GM12878 (cell line): ENCODE measurements at regions of chr7 and their contacts with region 1.

Region 1: GRCh38 chr7:35624299-35625186 is 70.4 kb downstream of the HERPUD2 start:
- DNase-seq: no peak
- ATAC-seq: peak; percentile 95
- H3K4me3 ChIP-seq: no peak overlapping the region
- H3K27ac ChIP-seq: no peak overlapping the region
- H3K4me1 ChIP-seq: no peaks in the 10 kb centered on the region
- H3K27me3 ChIP-seq: no peaks in the 10 kb centered on the region
- CTCF ChIP-seq: peak; percentile 80 to 88 (median 85)
- EP300 ChIP-seq: no peak
- POLR2A ChIP-seq: no peak
- RAD21 ChIP-seq: peak; percentile 89

Region 2: GRCh38 chr7:35185907-35186731 is 438.4 kb before region 1 on chr7:
- CTCF ChIA-PET with region 1: interaction called, 6 read pairs
- POLR2A ChIA-PET with region 1: no interaction called
- RAD21 ChIA-PET with region 1: no interaction called
- SMC1A ChIA-PET with region 1: no interaction called
- in situ Hi-C with region 1: no loop called
- intact Hi-C with region 1: loop called (anchors 5 kb)
- DNase-seq: no peak
- ATAC-seq: no peak
- H3K4me3 ChIP-seq: no peak overlapping the region
- H3K27ac ChIP-seq: no peak overlapping the region
- H3K4me1 ChIP-seq: no peaks in the 10 kb centered on the region
- H3K27me3 ChIP-seq: no peaks in the 10 kb centered on the region; a peak in 2 of 4 replicates
- CTCF ChIP-seq: no peak
- EP300 ChIP-seq: no peak
- POLR2A ChIP-seq: no peak
- RAD21 ChIP-seq: no peak

Region 3: GRCh38 chr7:35424869-35425495 is 199.6 kb before region 1 on chr7:
- CTCF ChIA-PET with region 1: interaction called, 21 read pairs
- POLR2A ChIA-PET with region 1: no interaction called
- RAD21 ChIA-PET with region 1: interaction called, 8 read pairs
- SMC1A ChIA-PET with region 1: interaction called, 12 read pairs
- in situ Hi-C with region 1: loop called (anchors 10 kb)
- intact Hi-C with region 1: loop called (anchors 1 kb)
- DNase-seq: no peak
- ATAC-seq: peak; percentile 91
- H3K4me3 ChIP-seq: no peak overlapping the region
- H3K27ac ChIP-seq: no peak overlapping the region
- H3K4me1 ChIP-seq: no peaks in the 10 kb centered on the region
- H3K27me3 ChIP-seq: no peaks in the 10 kb centered on the region; a peak in 1 of 4 replicates
- CTCF ChIP-seq: peak; percentile 60 to 81 (median 77)
- EP300 ChIP-seq: no peak
- POLR2A ChIP-seq: no peak
- RAD21 ChIP-seq: peak; percentile 66

Region 4: DNA sequence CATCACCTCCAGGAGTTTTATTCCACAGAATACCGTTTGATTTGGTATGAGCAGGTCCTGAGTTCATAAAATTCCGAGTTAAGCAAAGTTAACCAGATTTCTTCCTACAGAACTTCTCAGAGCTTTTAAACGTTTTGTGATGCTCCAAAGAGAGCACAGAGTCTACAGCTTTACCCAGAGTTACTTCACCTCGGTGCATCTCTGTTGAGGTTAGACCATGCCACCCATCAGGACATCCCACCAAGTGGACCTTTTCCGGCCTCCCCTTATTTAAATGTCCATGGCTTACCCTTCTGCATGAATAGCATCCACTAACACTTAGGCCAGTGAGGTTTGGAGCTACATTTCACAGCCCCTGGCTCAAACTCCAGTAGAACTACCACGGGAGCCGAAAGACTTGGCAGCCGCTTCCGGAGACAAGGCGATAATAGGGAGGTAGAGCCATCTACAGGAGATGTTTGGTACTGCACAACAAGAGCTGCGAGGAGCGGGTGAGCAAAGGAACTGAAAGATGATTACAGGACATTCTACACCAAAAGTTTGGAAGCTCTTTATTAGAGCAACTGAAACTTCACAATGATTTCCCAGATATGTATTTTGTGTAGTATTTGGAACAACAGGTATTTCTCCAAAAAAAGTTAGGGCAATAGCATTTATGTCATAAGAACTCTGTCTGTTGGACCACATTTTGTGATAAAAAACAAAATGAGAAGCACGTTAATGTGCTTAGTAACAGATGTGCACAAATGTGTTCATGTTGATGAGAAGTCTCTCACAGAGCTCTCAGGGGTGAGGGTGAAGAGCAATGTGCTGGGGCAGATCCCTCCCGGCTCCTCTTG is 104.4 kb before region 1 on chr7:
- CTCF ChIA-PET with region 1: interaction called, 5 read pairs
- POLR2A ChIA-PET with region 1: no interaction called
- RAD21 ChIA-PET with region 1: no interaction called
- SMC1A ChIA-PET with region 1: interaction called, 5 read pairs
- in situ Hi-C with region 1: no loop called
- intact Hi-C with region 1: loop called (anchors 1 kb)
- DNase-seq: peak; percentile 4
- ATAC-seq: peak; percentile 93
- H3K4me3 ChIP-seq: no peak overlapping the region
- H3K27ac ChIP-seq: no peak overlapping the region
- H3K4me1 ChIP-seq: no peaks in the 10 kb centered on the region
- H3K27me3 ChIP-seq: peaks cover 0 to 4% of the 10 kb centered on the region in 2 experiments; a peak in 2 of 4 replicates
- CTCF ChIP-seq: peak; percentile 86 to 87 (median 86)
- EP300 ChIP-seq: no peak
- POLR2A ChIP-seq: no peak
- RAD21 ChIP-seq: peak; percentile 81

Region 5: GRCh38 chr7:35537067-35538023 is 87.2 kb before region 1 on chr7:
- CTCF ChIA-PET with region 1: interaction called, 21 read pairs
- POLR2A ChIA-PET with region 1: no interaction called
- RAD21 ChIA-PET with region 1: interaction called, 4 read pairs
- SMC1A ChIA-PET with region 1: interaction called, 9 read pairs
- in situ Hi-C with region 1: no loop called
- intact Hi-C with region 1: loop called (anchors 5 kb)
- DNase-seq: no peak
- ATAC-seq: peak; percentile 100
- H3K4me3 ChIP-seq: no peak overlapping the region
- H3K27ac ChIP-seq: no peak overlapping the region
- H3K4me1 ChIP-seq: no peaks in the 10 kb centered on the region
- H3K27me3 ChIP-seq: no peaks in the 10 kb centered on the region
- CTCF ChIP-seq: peak; percentile 94 to 96 (median 95)
- EP300 ChIP-seq: no peak
- POLR2A ChIP-seq: no peak
- RAD21 ChIP-seq: peak; percentile 76

Region 6: DNA sequence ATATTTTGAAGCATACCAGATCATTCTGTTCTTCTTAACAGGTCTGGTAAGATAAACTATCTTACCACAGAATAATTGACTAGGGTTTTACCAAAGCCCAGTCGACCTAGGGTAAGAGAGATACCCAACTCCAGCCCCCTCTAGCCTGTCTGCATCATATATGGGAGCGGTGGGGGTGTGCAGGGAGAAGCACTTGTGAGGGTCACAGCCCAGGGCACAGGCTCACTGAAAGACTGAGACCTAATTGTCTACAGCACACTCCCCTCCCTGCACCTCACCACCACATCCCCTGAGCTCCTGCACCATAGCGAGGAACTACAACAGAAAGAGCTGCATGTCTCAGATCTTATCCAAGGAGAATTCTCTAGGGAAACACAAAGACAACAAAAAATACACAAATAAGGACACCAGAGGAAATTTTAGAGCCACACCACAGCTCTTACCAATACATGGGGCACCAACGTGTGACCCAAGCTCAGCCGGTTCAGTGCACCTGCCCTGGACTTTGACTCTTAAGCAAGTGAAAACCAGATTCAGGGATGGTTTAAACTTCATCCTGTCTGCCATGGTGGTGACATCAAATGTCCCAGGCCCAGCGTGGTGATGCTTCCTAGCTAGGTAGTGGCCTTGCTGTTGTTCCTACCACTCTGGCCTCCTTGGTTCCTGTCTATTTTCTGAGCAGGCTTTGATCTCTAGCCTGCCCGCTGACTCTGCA is 80.4 kb before region 1 on chr7:
- CTCF ChIA-PET with region 1: interaction called, 21 read pairs
- POLR2A ChIA-PET with region 1: no interaction called
- RAD21 ChIA-PET with region 1: interaction called, 4 read pairs
- SMC1A ChIA-PET with region 1: interaction called, 10 read pairs
- in situ Hi-C with region 1: no loop called
- intact Hi-C with region 1: loop called (anchors 5 kb)
- DNase-seq: no peak
- ATAC-seq: peak; percentile 53
- H3K4me3 ChIP-seq: no peak overlapping the region
- H3K27ac ChIP-seq: no peak overlapping the region
- H3K4me1 ChIP-seq: no peaks in the 10 kb centered on the region
- H3K27me3 ChIP-seq: peaks cover 0 to 2% of the 10 kb centered on the region in 2 experiments; a peak in 2 of 4 replicates
- CTCF ChIP-seq: no peak
- EP300 ChIP-seq: no peak
- POLR2A ChIP-seq: no peak
- RAD21 ChIP-seq: no peak

Region 7: DNA sequence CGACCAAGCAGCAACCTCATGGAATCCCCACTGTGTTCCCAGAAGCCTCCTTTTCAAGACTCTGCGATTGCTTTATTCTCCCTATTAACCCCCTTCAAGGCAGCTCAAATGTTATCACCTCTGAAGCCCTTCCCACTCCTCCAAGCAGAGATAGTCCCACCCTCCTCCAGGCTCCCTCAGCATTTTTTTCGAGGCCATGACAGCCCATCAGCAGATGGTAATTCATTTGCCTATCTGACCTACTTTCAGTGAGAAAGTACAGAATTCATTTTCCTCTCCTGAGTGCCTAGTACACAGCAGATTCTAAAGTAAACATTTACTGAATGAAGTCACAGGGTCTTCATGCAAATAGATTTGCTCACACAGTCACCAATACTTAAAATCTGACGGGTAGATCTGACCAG is 22.6 kb after region 1 on chr7:
- CTCF ChIA-PET with region 1: interaction called, 11 read pairs
- POLR2A ChIA-PET with region 1: interaction called, 3 read pairs
- RAD21 ChIA-PET with region 1: interaction called, 5 read pairs
- SMC1A ChIA-PET with region 1: interaction called, 11 read pairs
- in situ Hi-C with region 1: no loop called
- intact Hi-C with region 1: no loop called
- DNase-seq: no peak
- ATAC-seq: peak; percentile 65
- H3K4me3 ChIP-seq: no peak overlapping the region
- H3K27ac ChIP-seq: peak overlapping the region; percentile 58
- H3K4me1 ChIP-seq: peaks cover 22% of the 10 kb centered on the region
- H3K27me3 ChIP-seq: no peaks in the 10 kb centered on the region
- CTCF ChIP-seq: no peak
- EP300 ChIP-seq: no peak
- POLR2A ChIP-seq: no peak
- RAD21 ChIP-seq: no peak

Region 8: DNA sequence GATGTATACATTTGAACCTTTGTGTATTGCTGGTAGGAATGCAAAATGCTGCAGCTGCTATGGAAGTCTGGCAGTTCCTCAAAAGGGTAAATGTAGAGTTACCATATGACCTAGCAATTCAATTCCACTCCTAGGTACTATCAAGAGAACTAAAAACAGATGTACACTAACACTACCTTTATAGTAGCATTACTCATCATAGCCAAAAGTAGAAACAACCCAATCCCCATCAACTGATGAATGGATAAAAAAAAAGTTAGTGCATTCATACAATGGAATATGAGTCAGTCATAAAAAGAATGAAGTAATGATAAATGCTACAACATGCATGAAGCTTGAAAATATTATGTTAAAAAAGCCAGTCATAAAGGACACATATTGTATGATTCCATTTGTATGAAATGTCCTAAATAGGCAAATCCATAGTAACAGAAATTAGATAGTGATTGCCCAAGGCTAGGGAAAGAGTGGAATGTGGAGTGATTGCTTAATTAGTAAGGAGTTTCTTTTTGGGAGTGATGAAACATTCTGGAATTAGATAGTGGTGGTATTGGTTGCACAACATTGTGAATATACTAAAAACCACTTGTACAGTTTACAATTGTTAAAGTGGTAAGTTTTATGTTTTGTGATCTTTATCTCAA is 1196.1 kb after region 1 on chr7:
- CTCF ChIA-PET with region 1: no interaction called
- POLR2A ChIA-PET with region 1: no interaction called
- RAD21 ChIA-PET with region 1: no interaction called
- SMC1A ChIA-PET with region 1: no interaction called
- in situ Hi-C with region 1: no loop called
- intact Hi-C with region 1: no loop called
- DNase-seq: no peak
- ATAC-seq: no peak
- H3K4me3 ChIP-seq: no peak overlapping the region
- H3K27ac ChIP-seq: no peak overlapping the region
- H3K4me1 ChIP-seq: no peaks in the 10 kb centered on the region
- H3K27me3 ChIP-seq: no peaks in the 10 kb centered on the region; a peak in 1 of 4 replicates
- CTCF ChIP-seq: no peak
- EP300 ChIP-seq: no peak
- POLR2A ChIP-seq: no peak
- RAD21 ChIP-seq: no peak